ENCODE measurements at regions of chr22 and their contacts with region 1.

Region 1: GRCh38 chr22:30634471-30635233 is 929 bp upstream of the SLC35E4 start:
- DNase-seq: peak; percentile 82 to 96 (median 88)
- H3K4me3 ChIP-seq: peak overlapping the region in 1 of 4 donors; percentile 70
- H3K27ac ChIP-seq: peak overlapping the region in 4 of 5 donors; percentile 74 to 90 (median 80)
- H3K4me1 ChIP-seq: peaks cover 22 to 30% of the 10 kb centered on the region in 2 donors
- H3K27me3 ChIP-seq: no peaks in the 10 kb centered on the region
- CTCF ChIP-seq: peak; percentile 96 to 99 (median 98)
- POLR2A ChIP-seq: no peak

Region 2: GRCh38 chr22:30224161-30224857 is 410.3 kb before region 1 on chr22:
- intact Hi-C with region 1: no loop called
- DNase-seq: peak in 1 of 7 donors; percentile 30
- H3K4me3 ChIP-seq: no peak overlapping the region
- H3K27ac ChIP-seq: no peak overlapping the region
- H3K4me1 ChIP-seq: no peaks in the 10 kb centered on the region
- H3K27me3 ChIP-seq: no peaks in the 10 kb centered on the region
- CTCF ChIP-seq: no peak
- POLR2A ChIP-seq: no peak

Region 3: DNA sequence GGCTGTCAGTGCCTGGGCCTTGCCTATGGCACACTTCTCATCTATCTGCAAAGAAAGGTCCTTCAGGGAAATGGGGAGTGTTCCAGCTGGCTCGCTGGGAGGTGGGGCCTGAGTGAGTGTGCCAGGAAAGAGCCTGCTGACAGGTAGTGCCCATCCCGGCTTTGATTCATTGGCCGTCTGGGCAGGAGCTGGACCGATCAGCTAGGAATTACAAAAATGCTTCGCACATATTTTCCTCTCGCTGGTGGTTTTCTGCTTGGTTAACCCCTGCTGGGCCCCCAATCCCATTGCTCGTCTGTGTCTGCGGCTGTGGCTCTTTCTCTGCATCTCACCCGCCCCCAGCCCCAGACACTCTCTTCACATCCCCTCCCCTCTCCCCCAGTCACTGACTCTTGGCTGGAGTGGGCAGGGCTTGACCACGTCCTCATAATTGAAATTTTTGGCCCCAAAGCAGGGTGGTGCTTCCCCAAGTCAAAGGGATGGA is 398.9 kb before region 1 on chr22:
- intact Hi-C with region 1: no loop called
- DNase-seq: peak in 6 of 7 donors; percentile 67 to 80 (median 77)
- H3K4me3 ChIP-seq: no peak overlapping the region
- H3K27ac ChIP-seq: peak overlapping the region in 2 of 5 donors; percentile 32 to 81
- H3K4me1 ChIP-seq: peaks cover 25 to 26% of the 10 kb centered on the region in 2 donors
- H3K27me3 ChIP-seq: no peaks in the 10 kb centered on the region
- CTCF ChIP-seq: no peak
- POLR2A ChIP-seq: no peak

Region 4: DNA sequence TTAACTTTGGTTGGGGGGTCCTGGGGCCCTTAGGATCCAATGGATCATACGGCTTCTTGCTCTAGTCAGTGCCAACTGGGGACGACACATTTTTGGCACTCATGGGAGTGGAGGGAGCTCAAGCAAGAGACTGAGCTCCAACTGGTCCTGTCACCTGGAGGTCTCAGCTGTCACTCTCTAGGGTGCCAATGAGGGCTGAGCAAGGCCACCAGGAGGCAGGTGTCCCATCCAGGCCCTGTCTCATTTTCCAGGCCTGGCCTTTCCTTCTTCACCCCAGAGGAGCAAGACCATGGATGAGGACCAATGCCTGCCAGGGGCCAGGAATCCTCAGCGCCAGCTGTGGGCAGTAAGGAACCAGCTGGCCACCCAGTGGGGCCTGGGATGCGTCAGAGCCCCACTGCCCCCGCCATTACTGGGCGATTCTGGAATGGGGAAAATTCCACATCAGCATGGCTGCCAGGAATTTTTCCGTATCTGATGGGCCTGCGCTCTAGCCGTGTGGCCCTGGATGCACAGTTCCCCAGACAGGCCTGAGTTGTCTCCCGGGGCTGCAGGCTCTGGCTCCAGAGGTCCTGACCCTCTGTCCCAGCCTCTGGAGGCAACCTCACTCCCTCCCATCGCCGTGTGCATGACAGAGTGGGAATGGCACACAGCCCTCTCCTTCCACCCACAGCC is 59.5 kb before region 1 on chr22:
- intact Hi-C with region 1: no loop called
- DNase-seq: peak in 2 of 7 donors; percentile 4 to 57
- H3K4me3 ChIP-seq: no peak overlapping the region
- H3K27ac ChIP-seq: peak overlapping the region in 1 of 5 donors; percentile 40
- H3K4me1 ChIP-seq: peaks cover 0 to 4% of the 10 kb centered on the region in 2 donors
- H3K27me3 ChIP-seq: no peaks in the 10 kb centered on the region
- CTCF ChIP-seq: no peak
- POLR2A ChIP-seq: no peak

Region 5: GRCh38 chr22:30694171-30694639 is 59.6 kb after region 1 on chr22:
- intact Hi-C with region 1: loop called in 1 of 2 experiments (anchors 10 kb)
- DNase-seq: peak; percentile 69 to 84 (median 77)
- H3K4me3 ChIP-seq: peak overlapping the region in 3 of 4 donors; percentile 15 to 59 (median 18)
- H3K27ac ChIP-seq: peak overlapping the region in 4 of 5 donors; percentile 77 to 90 (median 88)
- H3K4me1 ChIP-seq: peaks cover 7 to 13% of the 10 kb centered on the region in 2 donors
- H3K27me3 ChIP-seq: no peaks in the 10 kb centered on the region
- CTCF ChIP-seq: peak in 2 of 6 experiments; percentile 8 to 18
- POLR2A ChIP-seq: peak in 1 of 2 donors; percentile 73

Region 6: DNA sequence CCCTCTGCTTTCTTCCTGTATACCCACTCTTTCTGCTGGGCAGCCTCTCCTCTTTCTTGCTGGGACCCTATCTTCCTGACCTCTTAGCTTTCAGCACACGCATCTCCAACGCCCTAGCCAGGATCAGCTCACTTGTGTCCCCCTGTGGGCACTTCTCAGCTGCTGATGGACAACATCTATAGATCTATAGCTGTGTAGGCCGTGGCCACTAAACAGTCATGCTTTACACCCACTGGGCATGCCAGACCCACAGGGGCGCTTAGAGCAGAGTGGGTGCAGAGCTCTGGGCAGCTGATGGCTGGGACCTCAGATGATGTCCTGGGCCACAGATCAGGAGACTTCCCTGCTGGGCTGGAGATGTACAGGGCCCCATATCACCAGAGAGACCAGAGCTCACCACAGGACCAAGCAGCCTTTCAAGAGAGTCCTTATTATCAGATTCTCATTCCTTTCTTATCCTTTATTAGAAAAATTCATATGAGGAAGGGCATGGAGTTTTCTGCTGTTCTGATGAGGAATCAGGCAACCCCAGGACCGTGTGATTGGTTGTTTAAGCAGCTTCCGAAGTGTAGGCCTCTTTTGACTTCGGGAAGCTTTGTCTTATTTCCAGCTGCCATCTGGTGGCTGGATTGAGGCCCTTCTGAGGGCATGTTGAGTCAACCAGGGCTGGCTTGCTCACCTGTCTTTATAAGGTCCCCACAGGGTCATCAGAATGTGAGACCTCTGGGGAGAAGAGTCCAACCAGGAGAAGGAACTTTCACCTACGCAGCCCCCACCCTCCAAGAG is 120.5 kb after region 1 on chr22:
- intact Hi-C with region 1: loop called (anchors 2 to 5 kb)
- DNase-seq: peak; percentile 63 to 85 (median 70)
- H3K4me3 ChIP-seq: no peak overlapping the region
- H3K27ac ChIP-seq: no peak overlapping the region
- H3K4me1 ChIP-seq: peaks cover 0 to 10% of the 10 kb centered on the region in 2 donors
- H3K27me3 ChIP-seq: no peaks in the 10 kb centered on the region
- CTCF ChIP-seq: peak; percentile 38 to 85 (median 80)
- POLR2A ChIP-seq: no peak

Region 7: GRCh38 chr22:30920407-30920806 is 285.8 kb after region 1 on chr22:
- intact Hi-C with region 1: loop called (anchors 10 kb)
- DNase-seq: peak; percentile 72 to 90 (median 78)
- H3K4me3 ChIP-seq: no peak overlapping the region
- H3K27ac ChIP-seq: no peak overlapping the region
- H3K4me1 ChIP-seq: peaks cover 0 to 13% of the 10 kb centered on the region in 2 donors
- H3K27me3 ChIP-seq: no peaks in the 10 kb centered on the region
- CTCF ChIP-seq: peak; percentile 67 to 92 (median 86)
- POLR2A ChIP-seq: no peak

Measured in adrenal gland (tissue), 19 donors.